ENCODE measurements at regions of chr3 and their contacts with region 1.

Region 1: GRCh38 chr3:9067352-9067975 is 104.2 kb upstream of the RAD18 start:
- DNase-seq: peak; percentile 61
- ATAC-seq: peak; percentile 74
- H3K4me3 Mint-ChIP-seq: no peak overlapping the region
- H3K27ac Mint-ChIP-seq: no peak overlapping the region
- H3K4me1 Mint-ChIP-seq: no peaks in the 10 kb centered on the region
- H3K27me3 Mint-ChIP-seq: no peaks in the 10 kb centered on the region
- CTCF ChIP-seq: peak; percentile 71

Region 2: GRCh38 chr3:8945890-8946600 is 121.4 kb before region 1 on chr3:
- CTCF ChIA-PET with region 1: no interaction called
- POLR2A ChIA-PET with region 1: no interaction called
- intact Hi-C with region 1: no loop called
- DNase-seq: no peak
- ATAC-seq: no peak
- H3K4me3 Mint-ChIP-seq: no peak overlapping the region
- H3K27ac Mint-ChIP-seq: no peak overlapping the region
- H3K4me1 Mint-ChIP-seq: peaks cover 8% of the 10 kb centered on the region
- H3K27me3 Mint-ChIP-seq: no peaks in the 10 kb centered on the region
- CTCF ChIP-seq: no peak

Region 3: DNA sequence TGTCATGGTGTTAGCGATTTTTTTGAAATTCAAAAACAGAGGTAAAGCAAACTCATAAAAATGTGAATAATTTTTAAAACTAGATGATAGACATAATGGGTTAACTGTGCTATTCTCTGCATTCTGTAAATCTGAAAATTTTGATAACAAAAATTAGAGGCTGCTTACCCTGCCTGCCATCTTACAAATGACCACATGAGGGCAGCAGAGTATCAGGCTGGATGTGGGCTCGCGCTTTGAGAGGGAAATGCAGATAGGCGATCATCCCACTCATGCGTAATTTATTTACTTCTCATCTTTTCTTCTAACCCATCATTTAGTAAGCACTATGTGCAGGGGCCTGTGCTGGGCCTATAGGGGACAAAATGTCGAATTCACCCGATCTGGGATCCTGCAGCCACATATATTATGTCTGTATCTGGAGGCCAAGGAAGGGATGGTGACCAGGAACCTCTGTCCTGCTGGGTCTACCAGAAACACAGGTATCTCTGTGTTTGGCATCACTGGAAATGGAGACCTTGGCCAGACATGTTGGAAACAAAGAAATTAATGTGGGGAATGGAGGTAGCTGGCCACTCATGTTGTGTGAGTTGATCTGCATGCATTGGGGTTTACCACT is 96.4 kb before region 1 on chr3:
- CTCF ChIA-PET with region 1: interaction called, 11 read pairs
- POLR2A ChIA-PET with region 1: no interaction called
- intact Hi-C with region 1: loop called (anchors 1 kb)
- DNase-seq: peak; percentile 81
- ATAC-seq: peak; percentile 90
- H3K4me3 Mint-ChIP-seq: no peak overlapping the region
- H3K27ac Mint-ChIP-seq: no peak overlapping the region
- H3K4me1 Mint-ChIP-seq: peaks cover 2% of the 10 kb centered on the region
- H3K27me3 Mint-ChIP-seq: peaks cover 9% of the 10 kb centered on the region
- CTCF ChIP-seq: peak; percentile 94

Region 4: GRCh38 chr3:9088441-9089353 is 21.2 kb after region 1 on chr3:
- CTCF ChIA-PET with region 1: no interaction called
- POLR2A ChIA-PET with region 1: no interaction called
- intact Hi-C with region 1: no loop called
- DNase-seq: no peak
- ATAC-seq: no peak
- H3K4me3 Mint-ChIP-seq: no peak overlapping the region
- H3K27ac Mint-ChIP-seq: no peak overlapping the region
- H3K4me1 Mint-ChIP-seq: no peaks in the 10 kb centered on the region
- H3K27me3 Mint-ChIP-seq: no peaks in the 10 kb centered on the region
- CTCF ChIP-seq: no peak

Region 5: GRCh38 chr3:9135930-9136525 is 68.6 kb after region 1 on chr3:
- CTCF ChIA-PET with region 1: no interaction called
- POLR2A ChIA-PET with region 1: no interaction called
- intact Hi-C with region 1: no loop called
- DNase-seq: peak; percentile 5
- ATAC-seq: peak; percentile 34
- H3K4me3 Mint-ChIP-seq: no peak overlapping the region
- H3K27ac Mint-ChIP-seq: no peak overlapping the region
- H3K4me1 Mint-ChIP-seq: no peaks in the 10 kb centered on the region
- H3K27me3 Mint-ChIP-seq: peaks cover 32% of the 10 kb centered on the region
- CTCF ChIP-seq: no peak

Region 6: DNA sequence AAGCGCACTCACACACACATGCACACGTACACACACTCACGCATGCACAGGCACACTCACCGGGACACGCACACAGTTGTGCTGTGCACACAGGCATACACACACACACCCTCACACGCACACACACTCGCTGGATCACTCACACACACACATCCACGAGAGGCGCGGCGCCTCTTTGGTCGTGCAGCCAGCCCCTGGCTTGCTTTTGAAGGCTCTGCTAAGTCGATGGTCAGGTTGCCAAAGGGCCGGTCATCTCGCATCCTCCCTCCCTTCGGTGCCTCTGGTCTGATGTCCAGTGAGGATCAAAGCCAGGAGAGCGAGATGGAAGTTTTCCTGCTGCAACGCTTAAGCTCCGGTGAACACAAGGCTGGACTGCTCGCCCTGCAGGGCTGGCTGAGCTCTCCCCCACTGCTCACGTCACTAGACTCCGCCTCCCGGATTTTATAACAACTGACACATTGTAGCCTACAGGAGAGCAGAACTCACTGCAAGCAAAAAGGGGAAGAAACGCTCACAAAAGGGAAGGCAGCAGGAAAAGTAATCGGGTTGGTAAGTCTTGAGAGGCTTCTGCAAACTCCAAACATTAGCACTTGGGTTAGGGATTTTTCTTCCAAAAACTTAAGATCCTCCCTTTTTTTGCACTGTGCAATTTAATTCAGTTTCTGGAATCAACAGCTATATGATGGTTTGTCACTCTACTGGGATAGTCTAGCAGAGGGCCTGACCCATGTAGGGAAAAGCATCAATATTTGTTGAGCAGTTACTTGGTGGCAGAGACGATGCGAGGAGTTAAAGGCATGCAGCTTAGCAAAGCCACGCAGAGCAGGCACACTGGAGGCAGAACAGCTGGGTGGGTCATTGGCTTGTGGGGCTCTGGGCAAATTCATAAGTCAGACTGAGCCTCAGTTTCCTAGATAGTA is 182.1 kb after region 1 on chr3 and contains the start of gene SRGAP3:
- CTCF ChIA-PET with region 1: no interaction called
- POLR2A ChIA-PET with region 1: no interaction called
- intact Hi-C with region 1: no loop called
- DNase-seq: peak; percentile 91
- ATAC-seq: peak; percentile 100
- H3K4me3 Mint-ChIP-seq: peak within 1 kb of the TSS; percentile 75
- H3K27ac Mint-ChIP-seq: no peak within 1 kb of the TSS
- H3K4me1 Mint-ChIP-seq: peaks cover 21% of the 10 kb centered on the region
- H3K27me3 Mint-ChIP-seq: peaks cover 5% of the 10 kb centered on the region
- CTCF ChIP-seq: peak; percentile 44
- total RNA-seq, gene SRGAP3: 1.8 to 2.5 TPM